ENCODE measurements at regions of chr4 and their contacts with region 1.

Region 1: DNA sequence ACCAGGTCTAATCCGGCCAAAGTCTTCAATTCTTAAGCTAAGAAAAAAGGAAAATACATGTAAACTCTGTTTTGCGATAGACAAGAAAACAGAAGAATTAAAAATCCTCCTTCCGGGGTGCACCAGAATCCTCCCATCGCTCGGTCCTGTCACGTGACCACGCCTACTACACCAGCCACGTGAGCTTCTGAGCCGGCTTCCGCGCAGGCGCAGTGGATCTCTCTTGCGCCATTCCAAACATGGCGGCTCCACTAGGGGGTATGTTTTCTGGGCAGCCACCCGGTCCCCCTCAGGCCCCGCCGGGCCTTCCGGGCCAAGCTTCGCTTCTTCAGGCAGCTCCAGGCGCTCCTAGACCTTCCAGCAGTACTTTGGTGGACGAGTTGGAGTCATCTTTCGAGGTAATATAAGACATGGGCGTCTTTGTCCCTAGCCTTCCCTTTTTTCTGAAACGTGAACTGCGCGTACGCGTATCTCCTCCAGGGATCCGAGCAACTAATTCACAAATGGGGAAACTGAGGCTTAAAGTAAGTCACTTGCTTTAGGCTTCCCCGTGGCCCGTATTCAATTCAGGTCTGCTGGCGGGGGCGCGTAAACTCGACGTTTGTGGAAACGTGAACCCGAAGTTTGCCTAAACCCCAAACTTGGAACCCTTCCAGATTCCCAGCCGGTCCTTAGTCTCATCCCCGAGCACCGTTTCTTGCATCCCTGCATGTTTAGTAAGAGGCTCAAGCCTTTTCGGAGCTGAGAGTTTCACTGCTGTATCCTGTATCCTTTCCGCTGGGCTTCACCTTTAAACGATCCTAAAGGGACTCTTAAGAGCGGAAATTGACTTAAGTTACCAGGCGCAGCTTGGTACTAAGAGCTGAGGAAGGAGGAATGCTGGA is at the start of gene MED28:
- DNase-seq: peak; percentile 97
- H3K4me3 Mint-ChIP-seq: peak within 1 kb of the TSS; percentile 100
- H3K27ac Mint-ChIP-seq: peak within 1 kb of the TSS; percentile 97
- H3K4me1 Mint-ChIP-seq: peaks cover 48% of the 10 kb centered on the region
- H3K27me3 Mint-ChIP-seq: peaks cover 3% of the 10 kb centered on the region
- total RNA-seq, gene MED28: 52.9 to 54.5 TPM

Region 2: GRCh38 chr4:17511950-17512795 is 102.5 kb before region 1 on chr4 and contains the start of gene QDPR:
- CTCF ChIA-PET with region 1: no interaction called
- POLR2A ChIA-PET with region 1: interaction called, 4 read pairs
- intact Hi-C with region 1: loop called (anchors 2 kb)
- DNase-seq: peak; percentile 84
- H3K4me3 Mint-ChIP-seq: peak within 1 kb of the TSS; percentile 99
- H3K27ac Mint-ChIP-seq: peak within 1 kb of the TSS; percentile 77
- H3K4me1 Mint-ChIP-seq: peaks cover 26% of the 10 kb centered on the region
- H3K27me3 Mint-ChIP-seq: peaks cover 7% of the 10 kb centered on the region
- total RNA-seq, gene QDPR: 35.5 to 36.3 TPM

Region 3: GRCh38 chr4:17544205-17544604 is 70.5 kb before region 1 on chr4:
- CTCF ChIA-PET with region 1: interaction called, 19 read pairs
- POLR2A ChIA-PET with region 1: no interaction called
- intact Hi-C with region 1: loop called (anchors 1 kb)
- DNase-seq: no peak
- H3K4me3 Mint-ChIP-seq: no peak overlapping the region
- H3K27ac Mint-ChIP-seq: no peak overlapping the region
- H3K4me1 Mint-ChIP-seq: no peaks in the 10 kb centered on the region
- H3K27me3 Mint-ChIP-seq: peaks cover 13% of the 10 kb centered on the region

Region 4: GRCh38 chr4:17552427-17552826 is 62.2 kb before region 1 on chr4:
- CTCF ChIA-PET with region 1: interaction called, 19 read pairs
- POLR2A ChIA-PET with region 1: interaction called, 11 read pairs
- intact Hi-C with region 1: loop called (anchors 1 kb)
- DNase-seq: no peak
- H3K4me3 Mint-ChIP-seq: no peak overlapping the region
- H3K27ac Mint-ChIP-seq: no peak overlapping the region
- H3K4me1 Mint-ChIP-seq: no peaks in the 10 kb centered on the region
- H3K27me3 Mint-ChIP-seq: no peaks in the 10 kb centered on the region